Posterior cingulate gyrus (tissue), 11 donors: ENCODE measurements at regions of chr13 and their contacts with region 1.

Region 1: GRCh38 chr13:25286969-25287961 is at the start of gene MTMR6:
- DNase-seq: peak; percentile 87 to 99 (median 95)

Region 2: GRCh38 chr13:24995226-24995804 is 291.9 kb before region 1 on chr13:
- intact Hi-C with region 1: loop called (anchors 5 kb)
- DNase-seq: peak in 4 of 10 donors; percentile 56 to 89 (median 62)

Region 3: DNA sequence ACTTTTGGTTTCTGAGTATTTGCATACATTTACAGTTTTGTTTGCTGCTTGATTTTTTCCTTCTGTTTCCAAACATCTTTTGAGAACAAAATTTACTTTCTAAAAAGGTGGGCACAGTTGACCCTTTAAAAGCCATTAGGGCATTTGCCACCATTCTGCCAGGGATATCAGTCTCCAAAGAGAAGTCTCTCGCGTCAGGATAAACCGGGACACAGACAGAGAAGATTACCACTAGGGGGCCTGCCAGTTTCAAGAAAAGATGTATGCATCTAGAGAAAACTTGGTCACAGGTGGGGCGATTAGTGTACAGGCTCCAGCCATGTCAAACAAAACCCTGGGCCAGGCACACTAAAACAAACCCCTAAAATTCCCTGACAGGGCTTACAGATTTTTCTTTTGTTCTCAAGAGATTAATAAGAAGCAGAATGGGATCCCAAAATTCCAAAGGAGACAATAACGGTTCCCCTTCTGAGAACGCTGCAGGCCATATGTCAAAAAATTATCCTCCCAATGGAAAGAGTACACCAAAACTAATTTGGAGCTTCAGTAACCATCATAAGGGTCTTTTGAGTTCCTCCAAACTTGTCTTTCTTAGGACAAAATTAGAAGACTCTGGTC is 202.0 kb before region 1 on chr13:
- intact Hi-C with region 1: loop called (anchors 2 kb)
- DNase-seq: peak in 6 of 10 donors; percentile 34 to 86 (median 48)

Region 4: DNA sequence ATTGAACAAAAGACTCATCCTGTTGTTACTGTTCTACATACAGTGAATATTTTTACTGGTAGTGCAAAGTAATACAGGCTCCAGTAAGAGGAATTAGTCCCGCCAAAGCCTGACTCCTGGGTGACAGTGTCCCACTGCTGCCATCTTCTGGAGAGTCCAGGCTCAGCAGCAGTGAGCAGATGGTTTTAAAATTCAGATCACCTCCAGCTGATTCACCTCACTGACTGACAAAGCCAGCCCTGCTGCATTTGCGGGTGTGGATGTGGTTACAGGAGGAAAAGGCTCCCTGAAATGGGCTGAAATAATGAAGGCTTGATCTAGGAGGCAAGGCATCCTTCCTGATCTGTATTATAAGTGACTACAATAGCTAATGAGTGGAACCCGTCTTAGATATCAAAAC is 173.0 kb before region 1 on chr13:
- intact Hi-C with region 1: loop called (anchors 2 kb)
- DNase-seq: peak; percentile 72 to 97 (median 86)

Region 5: GRCh38 chr13:25171517-25172302 is 115.6 kb before region 1 on chr13 and contains the start of gene AMER2:
- intact Hi-C with region 1: loop called (anchors 5 kb)
- DNase-seq: peak; percentile 81 to 98 (median 90)

Region 6: GRCh38 chr13:25301347-25302047 is 14.2 kb after region 1 on chr13 and contains the start of gene NUP58:
- intact Hi-C with region 1: loop called (anchors 2 kb)
- DNase-seq: peak; percentile 93 to 99 (median 96)

Region 7: GRCh38 chr13:25375727-25376358 is 88.6 kb after region 1 on chr13:
- intact Hi-C with region 1: loop called (anchors 5 kb)
- DNase-seq: peak in 1 of 10 donors; percentile 25

Region 8: GRCh38 chr13:25602176-25602575 is 314.9 kb after region 1 on chr13:
- intact Hi-C with region 1: no loop called
- DNase-seq: no peak